Spleen (tissue), 13 donors: ENCODE measurements at regions of chr12 and their contacts with region 1.

Region 1: DNA sequence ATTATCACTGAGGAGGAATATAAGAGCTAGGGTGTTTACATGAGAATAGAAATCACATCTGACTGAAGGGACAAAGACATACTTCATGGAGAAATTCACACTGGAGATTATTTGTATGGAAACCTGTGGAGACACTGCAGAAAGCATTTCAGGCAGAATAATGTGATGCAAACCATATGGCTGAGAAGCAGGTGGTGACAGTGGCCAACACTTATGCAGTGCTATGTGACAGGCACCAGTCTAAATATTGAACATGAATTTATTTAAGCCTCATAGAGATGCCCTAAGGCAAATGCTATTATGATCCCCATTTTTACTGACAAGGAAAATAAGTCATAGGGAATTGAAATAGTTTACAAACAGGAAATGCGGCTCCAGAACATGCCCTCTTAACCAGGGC is 16.2 kb downstream of the ALG10B start:
- DNase-seq: no peak
- H3K4me3 ChIP-seq: no peak overlapping the region
- H3K27ac ChIP-seq: no peak overlapping the region
- H3K4me1 ChIP-seq: peaks cover 0 to 6% (median 0%) of the 10 kb centered on the region in 6 donors
- H3K27me3 ChIP-seq: no peaks in the 10 kb centered on the region
- CTCF ChIP-seq: no peak
- POLR2A ChIP-seq: no peak

Region 2: GRCh38 chr12:38921025-38921677 is 588.3 kb after region 1 on chr12:
- intact Hi-C with region 1: loop called (anchors 5 kb)
- DNase-seq: no peak
- H3K4me3 ChIP-seq: no peak overlapping the region
- H3K27ac ChIP-seq: no peak overlapping the region
- H3K4me1 ChIP-seq: no peaks in the 10 kb centered on the region
- H3K27me3 ChIP-seq: no peaks in the 10 kb centered on the region
- CTCF ChIP-seq: peak in 7 of 11 experiments; percentile 25 to 45 (median 41)
- POLR2A ChIP-seq: no peak

Region 3: GRCh38 chr12:39186744-39187143 is 853.9 kb after region 1 on chr12:
- intact Hi-C with region 1: no loop called
- DNase-seq: no peak
- H3K4me3 ChIP-seq: no peak overlapping the region
- H3K27ac ChIP-seq: no peak overlapping the region
- H3K4me1 ChIP-seq: no peaks in the 10 kb centered on the region
- H3K27me3 ChIP-seq: no peaks in the 10 kb centered on the region
- CTCF ChIP-seq: no peak
- POLR2A ChIP-seq: no peak

Region 4: GRCh38 chr12:39272871-39273770 is 940.3 kb after region 1 on chr12:
- intact Hi-C with region 1: loop called (anchors 10 kb)
- DNase-seq: no peak
- H3K4me3 ChIP-seq: no peak overlapping the region
- H3K27ac ChIP-seq: no peak overlapping the region
- H3K4me1 ChIP-seq: no peaks in the 10 kb centered on the region
- H3K27me3 ChIP-seq: no peaks in the 10 kb centered on the region
- CTCF ChIP-seq: peak in 8 of 11 experiments; percentile 36 to 73 (median 60)
- POLR2A ChIP-seq: no peak